GM10248 (cell line): ENCODE measurements at regions of chr3 and their contacts with region 1.

Region 1: DNA sequence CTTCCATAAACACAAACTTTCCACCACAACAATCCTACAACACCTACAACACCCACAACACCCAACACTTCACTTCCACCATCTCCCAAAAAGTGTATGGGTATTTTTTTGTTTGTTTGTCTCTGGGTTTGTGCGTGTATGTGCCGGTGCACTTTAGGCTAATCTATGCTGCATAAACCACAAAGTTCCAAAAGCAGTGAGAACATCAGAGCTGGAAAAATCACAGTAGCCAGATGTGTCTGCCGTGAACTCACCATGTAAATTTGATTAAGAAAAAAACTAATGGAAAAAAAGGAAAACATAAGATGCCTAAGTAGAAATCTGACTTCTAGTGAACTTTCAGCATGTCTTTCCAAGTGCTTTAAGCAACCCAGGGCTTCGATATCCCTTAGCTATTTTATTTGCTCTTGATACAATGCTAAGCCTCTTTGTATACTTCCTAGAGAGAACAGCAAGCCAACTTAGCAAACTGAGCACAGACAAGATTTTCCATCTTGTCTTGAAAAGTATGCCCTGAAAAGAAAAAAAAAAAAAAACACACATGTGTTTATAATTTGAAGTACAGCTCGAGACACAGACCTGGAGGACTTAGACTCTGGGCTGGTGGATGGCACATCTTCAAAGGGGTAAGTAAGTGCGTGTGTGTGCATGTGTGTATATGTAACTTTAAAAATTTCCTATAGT is 91.4 kb downstream of the WWTR1 start:
- DNase-seq: no peak
- CTCF ChIP-seq: no peak

Region 2: DNA sequence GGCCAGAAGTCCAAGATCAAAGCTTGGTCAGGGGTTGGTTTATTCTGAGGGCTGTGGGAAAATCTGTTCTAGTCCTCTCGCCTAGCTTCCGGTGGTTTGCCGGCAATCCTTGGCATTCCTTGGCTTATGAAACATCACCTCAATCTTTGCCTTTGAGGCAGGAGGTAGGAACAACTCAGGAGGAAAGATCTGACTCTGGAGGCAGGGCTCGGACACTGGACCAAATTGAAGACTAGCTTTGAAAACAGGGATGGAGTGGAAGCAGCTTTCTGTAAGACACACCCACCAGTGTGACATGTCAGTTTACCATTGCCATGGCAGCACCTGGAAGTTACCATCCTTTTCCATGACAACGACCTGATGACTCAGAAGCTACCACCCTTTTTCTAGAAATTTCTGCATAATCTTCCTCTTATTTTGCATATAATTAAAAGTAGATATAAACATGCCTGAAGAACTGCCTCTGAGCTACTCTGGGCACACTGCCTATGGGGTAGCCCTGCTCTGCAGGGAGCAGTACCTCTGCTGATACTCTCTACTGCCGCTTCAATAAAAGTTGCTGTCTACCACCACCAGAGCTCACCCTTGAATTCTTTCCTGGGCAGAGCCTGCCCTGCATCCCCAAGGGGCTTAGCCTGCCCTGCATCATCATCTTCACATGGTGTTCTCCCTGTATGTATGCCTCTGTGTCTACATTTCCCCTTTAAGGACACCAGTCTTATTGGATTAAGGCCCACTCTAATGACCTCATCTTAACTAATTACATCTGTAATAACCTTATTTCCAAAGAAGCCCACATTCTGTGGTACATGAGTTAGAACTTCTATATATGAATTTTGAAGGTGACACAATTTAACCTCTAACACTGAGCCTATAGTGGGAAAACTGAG is 130.2 kb before region 1 on chr3:
- CTCF ChIA-PET with region 1: no interaction called
- POLR2A ChIA-PET with region 1: no interaction called
- DNase-seq: no peak
- CTCF ChIP-seq: no peak

Region 3: GRCh38 chr3:149536429-149536828 is 30.0 kb before region 1 on chr3:
- CTCF ChIA-PET with region 1: interaction called, 15 read pairs
- POLR2A ChIA-PET with region 1: no interaction called
- DNase-seq: no peak
- CTCF ChIP-seq: no peak

Region 4: GRCh38 chr3:149603126-149604074 is 37.0 kb after region 1 on chr3:
- CTCF ChIA-PET with region 1: interaction called, 26 read pairs
- POLR2A ChIA-PET with region 1: no interaction called
- DNase-seq: no peak
- CTCF ChIP-seq: no peak

Region 5: DNA sequence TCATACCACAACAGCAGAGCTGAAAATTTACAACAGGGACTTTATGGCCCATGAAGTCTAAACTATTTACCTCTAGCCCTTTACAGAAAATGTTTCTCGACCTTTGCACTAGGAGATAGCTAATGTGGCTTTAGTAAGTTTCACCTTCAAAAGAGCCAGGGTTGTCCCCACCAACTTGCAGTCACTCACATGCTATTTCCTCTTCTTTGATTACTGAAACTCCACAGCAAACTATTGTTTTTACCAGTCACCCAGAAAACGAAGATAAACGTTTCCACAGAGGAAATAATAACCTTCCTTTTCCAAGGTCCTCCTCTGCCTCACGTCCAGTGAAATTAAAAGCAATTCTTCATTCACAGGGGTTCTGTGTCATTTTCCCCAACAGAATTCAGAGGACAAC is 43.2 kb after region 1 on chr3:
- CTCF ChIA-PET with region 1: interaction called, 15 read pairs
- POLR2A ChIA-PET with region 1: no interaction called
- DNase-seq: peak; percentile 67
- CTCF ChIP-seq: no peak

Region 6: GRCh38 chr3:149657926-149658733 is 91.7 kb after region 1 on chr3 and contains the start of gene WWTR1:
- CTCF ChIA-PET with region 1: interaction called, 33 read pairs
- POLR2A ChIA-PET with region 1: no interaction called
- DNase-seq: peak; percentile 83
- CTCF ChIP-seq: peak; percentile 50

Region 7: GRCh38 chr3:149752051-149752787 is 185.8 kb after region 1 on chr3 and contains the start of gene COMMD2:
- CTCF ChIA-PET with region 1: interaction called, 10 read pairs
- POLR2A ChIA-PET with region 1: no interaction called
- DNase-seq: peak; percentile 84
- CTCF ChIP-seq: no peak

Region 8: DNA sequence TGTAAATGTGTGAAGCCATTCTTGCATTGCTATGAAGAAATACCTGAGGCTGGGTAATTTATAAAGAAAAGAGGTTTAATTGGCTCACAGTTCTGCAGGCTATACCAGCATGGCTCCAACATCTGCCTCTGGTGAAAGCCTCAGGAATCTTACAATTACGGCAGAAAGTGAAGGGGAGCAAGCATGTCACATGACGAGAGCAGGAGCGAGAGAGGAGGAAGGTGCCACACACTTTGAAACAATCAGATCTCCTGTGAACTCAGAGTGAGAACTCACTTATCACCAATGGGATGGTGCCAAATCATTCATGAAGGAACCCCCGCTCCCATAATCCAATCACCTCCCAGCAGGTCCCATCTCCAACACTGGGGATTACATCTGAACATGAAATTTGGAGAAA is 628.1 kb after region 1 on chr3:
- CTCF ChIA-PET with region 1: no interaction called
- POLR2A ChIA-PET with region 1: no interaction called
- DNase-seq: no peak
- CTCF ChIP-seq: no peak